CD4-positive, alpha-beta T cell (primary cell): ENCODE measurements at regions of chr16 and their contacts with region 1.

Region 1: GRCh38 chr16:28873536-28874201 is 4.6 kb upstream of the ATP2A1 start:
- DNase-seq: peak; percentile 27 to 76 (median 54)
- ATAC-seq: peak; percentile 97
- H3K4me3 ChIP-seq: no peak overlapping the region
- H3K4me3 Mint-ChIP-seq: no peak overlapping the region
- H3K27ac ChIP-seq: no peak overlapping the region
- H3K27ac Mint-ChIP-seq: no peak overlapping the region
- H3K4me1 ChIP-seq: peaks cover 2% of the 10 kb centered on the region
- H3K4me1 Mint-ChIP-seq: no peaks in the 10 kb centered on the region
- H3K27me3 ChIP-seq: no peaks in the 10 kb centered on the region
- H3K27me3 Mint-ChIP-seq: no peaks in the 10 kb centered on the region
- CTCF ChIP-seq: peak; percentile 55

Region 2: GRCh38 chr16:28943281-28943680 is 69.6 kb after region 1 on chr16:
- CTCF ChIA-PET with region 1: interaction called, 9 read pairs
- POLR2A ChIA-PET with region 1: interaction called, 3 read pairs
- intact Hi-C with region 1: loop called (anchors 1 kb)
- DNase-seq: no peak
- ATAC-seq: no peak
- H3K4me3 ChIP-seq: no peak overlapping the region
- H3K4me3 Mint-ChIP-seq: no peak overlapping the region
- H3K27ac ChIP-seq: no peak overlapping the region
- H3K27ac Mint-ChIP-seq: no peak overlapping the region
- H3K4me1 ChIP-seq: peaks cover 8% of the 10 kb centered on the region
- H3K4me1 Mint-ChIP-seq: peaks cover 11% of the 10 kb centered on the region
- H3K27me3 ChIP-seq: no peaks in the 10 kb centered on the region
- H3K27me3 Mint-ChIP-seq: no peaks in the 10 kb centered on the region
- CTCF ChIP-seq: no peak